Right ventricle myocardium inferior (tissue), 1 donor: ENCODE measurements at regions of chr6 and their contacts with region 1.

Region 1: DNA sequence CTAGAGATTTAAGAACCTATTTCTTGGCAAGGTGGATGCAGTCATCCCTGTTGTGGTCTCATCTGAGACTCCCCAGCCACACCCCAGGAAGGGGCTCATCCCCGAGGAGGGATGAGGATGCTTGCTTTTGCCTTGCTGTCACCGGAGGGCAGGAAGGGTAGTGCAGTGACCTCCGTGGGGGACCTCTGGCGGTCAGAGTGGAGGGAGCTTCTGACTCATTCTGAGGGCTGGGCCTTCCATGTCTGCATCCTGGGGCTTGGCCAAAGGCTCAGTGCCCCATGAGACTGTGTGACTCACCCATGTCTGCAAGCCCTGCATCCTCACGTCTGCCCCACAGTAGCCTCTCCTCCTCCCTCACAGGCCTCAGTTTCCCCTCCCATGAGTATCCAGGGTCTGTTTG is 38.7 kb downstream of the UQCC2 start:
- DNase-seq: peak; percentile 93
- ATAC-seq: peak; percentile 95

Region 2: GRCh38 chr6:33633462-33634158 is 39.2 kb before region 1 on chr6:
- intact Hi-C with region 1: loop called (anchors 5 kb)
- DNase-seq: peak; percentile 86
- ATAC-seq: peak; percentile 85

Region 3: GRCh38 chr6:33869826-33870423 is 197.1 kb after region 1 on chr6:
- intact Hi-C with region 1: no loop called
- DNase-seq: no peak
- ATAC-seq: no peak